Activated CD4-positive, alpha-beta memory T cell treated with anti-CD3 and anti-CD28 coated beads for 36 hours (primary cell): ENCODE measurements at regions of chr5 and their contacts with region 1.

Region 1: DNA sequence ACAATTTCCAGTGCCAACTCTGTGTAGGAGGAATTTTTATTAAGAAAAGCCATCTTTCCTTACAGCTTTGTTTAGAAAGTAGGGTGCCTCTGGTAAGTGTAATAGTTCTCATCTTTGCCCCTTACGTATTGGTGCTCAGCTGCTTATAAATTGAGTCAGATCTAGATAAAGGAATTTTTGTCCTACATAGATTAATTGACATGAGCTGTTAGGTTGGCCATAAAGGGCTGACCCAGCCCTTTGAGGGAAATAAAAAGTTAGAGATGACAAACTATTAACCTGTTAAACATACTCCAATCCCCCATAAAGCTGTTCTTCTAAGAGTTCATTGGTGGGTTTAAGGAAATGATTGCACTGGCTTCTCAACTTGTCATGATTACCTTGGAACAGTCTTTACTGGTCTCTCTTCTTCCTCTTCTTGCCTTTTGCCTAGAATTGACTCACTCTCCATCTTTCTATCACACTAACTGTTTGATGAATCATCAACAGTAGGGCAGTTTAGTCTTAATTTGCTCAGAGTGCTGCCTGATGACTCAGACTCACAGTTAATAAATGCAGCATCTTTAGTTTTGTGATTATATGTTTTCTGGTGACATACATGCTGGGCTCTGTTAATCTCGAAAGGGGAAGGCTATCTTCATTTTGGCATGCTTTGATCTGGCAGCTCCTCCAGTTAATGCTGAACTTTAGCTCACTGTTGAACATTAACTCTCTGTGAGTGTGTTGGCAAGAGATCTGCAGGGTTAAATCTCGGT is 51.7 kb downstream of the ARHGAP26 start:
- DNase-seq: peak; percentile 35
- H3K4me3 Mint-ChIP-seq: no peak overlapping the region
- H3K27ac Mint-ChIP-seq: peak overlapping the region; percentile 83
- H3K4me1 Mint-ChIP-seq: peaks cover 71% of the 10 kb centered on the region
- H3K27me3 Mint-ChIP-seq: no peaks in the 10 kb centered on the region

Region 2: DNA sequence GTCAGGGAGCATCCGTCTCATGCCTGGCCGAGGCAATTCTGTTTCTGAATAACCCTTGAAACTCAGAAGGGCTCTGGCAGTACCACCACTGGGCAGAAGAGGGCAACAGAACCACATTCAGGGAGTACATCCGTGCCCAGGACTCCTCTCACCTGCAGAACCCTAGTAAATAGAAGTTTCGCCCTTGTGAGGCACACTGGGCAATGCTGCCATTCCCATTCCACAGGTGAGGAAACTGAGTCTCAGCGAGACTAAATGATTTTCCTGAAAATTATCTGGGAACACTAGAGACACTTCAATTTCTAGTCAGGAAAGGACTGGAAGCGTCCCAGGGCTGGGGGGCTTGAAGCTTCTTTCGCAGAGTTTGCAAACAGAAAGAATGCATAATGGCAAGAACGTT is 210.8 kb before region 1 on chr5:
- CTCF ChIA-PET with region 1: no interaction called
- POLR2A ChIA-PET with region 1: no interaction called
- intact Hi-C with region 1: loop called (anchors 10 kb)
- DNase-seq: peak; percentile 85
- H3K4me3 Mint-ChIP-seq: no peak overlapping the region
- H3K27ac Mint-ChIP-seq: no peak overlapping the region
- H3K4me1 Mint-ChIP-seq: no peaks in the 10 kb centered on the region
- H3K27me3 Mint-ChIP-seq: peaks cover 15% of the 10 kb centered on the region

Region 3: GRCh38 chr5:142699184-142699720 is 122.7 kb before region 1 on chr5:
- CTCF ChIA-PET with region 1: no interaction called
- POLR2A ChIA-PET with region 1: no interaction called
- intact Hi-C with region 1: no loop called
- DNase-seq: peak; percentile 86
- H3K4me3 Mint-ChIP-seq: no peak overlapping the region
- H3K27ac Mint-ChIP-seq: no peak overlapping the region
- H3K4me1 Mint-ChIP-seq: no peaks in the 10 kb centered on the region
- H3K27me3 Mint-ChIP-seq: peaks cover 6% of the 10 kb centered on the region

Region 4: DNA sequence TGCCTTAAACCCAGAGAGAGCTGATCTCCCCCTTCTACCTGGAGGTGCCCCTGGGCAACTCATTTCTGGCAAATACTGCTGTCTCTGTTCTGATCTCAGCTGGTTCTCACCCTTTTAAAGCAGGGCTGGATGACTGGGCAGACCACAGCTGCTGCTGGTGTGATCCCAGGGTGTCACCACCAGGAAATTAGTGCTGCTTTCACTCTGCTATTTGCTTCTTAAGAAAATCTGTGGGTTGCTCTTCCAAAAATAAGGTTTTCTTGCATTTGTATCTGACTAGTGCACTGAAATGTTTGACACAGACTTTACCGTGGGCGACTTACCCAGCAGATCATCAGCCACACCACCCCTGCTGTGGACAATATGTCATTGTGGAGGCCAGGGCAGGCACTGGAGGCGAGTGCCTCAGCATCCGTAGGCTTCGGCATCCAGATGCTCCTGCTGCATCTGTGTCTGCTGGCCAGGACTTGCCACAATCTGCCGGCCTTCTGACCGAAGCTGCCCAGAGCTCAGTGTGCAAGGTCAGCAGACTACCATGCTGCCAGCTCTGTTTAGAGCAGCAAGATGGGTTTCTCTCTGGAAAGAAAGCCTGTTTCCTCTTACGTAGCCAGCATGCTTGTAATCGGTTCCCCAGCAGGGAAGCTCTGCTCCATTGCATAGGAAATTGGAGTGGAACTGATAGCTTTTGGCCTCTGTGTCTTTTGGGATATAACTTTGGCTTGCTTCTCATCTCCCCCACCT is 38.1 kb before region 1 on chr5:
- CTCF ChIA-PET with region 1: interaction called, 5 read pairs
- POLR2A ChIA-PET with region 1: interaction called, 22 read pairs
- intact Hi-C with region 1: loop called (anchors 1 kb)
- DNase-seq: peak; percentile 90
- H3K4me3 Mint-ChIP-seq: peak overlapping the region; percentile 34
- H3K27ac Mint-ChIP-seq: peak overlapping the region; percentile 85
- H3K4me1 Mint-ChIP-seq: peaks cover 56% of the 10 kb centered on the region
- H3K27me3 Mint-ChIP-seq: no peaks in the 10 kb centered on the region

Region 5: DNA sequence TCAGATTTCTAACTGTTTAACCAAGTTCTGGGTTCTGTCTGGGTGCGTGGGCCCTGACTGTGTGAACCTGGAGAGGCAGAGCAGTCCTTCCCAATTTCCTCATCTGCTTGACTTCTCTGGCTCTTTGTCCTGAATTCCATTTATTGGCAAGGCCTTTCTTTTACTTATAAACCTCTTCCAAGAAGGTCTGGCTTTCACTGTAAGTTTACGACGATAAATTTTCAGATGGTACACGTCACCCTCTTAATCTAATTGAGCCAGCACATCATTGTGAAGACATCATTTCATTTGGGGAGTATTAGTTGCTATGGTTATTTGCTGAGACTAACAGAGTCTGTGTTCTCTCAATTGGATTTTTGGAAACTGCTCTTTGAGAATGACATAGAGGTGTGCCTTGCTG is 40.7 kb after region 1 on chr5:
- CTCF ChIA-PET with region 1: interaction called, 6 read pairs
- POLR2A ChIA-PET with region 1: no interaction called
- intact Hi-C with region 1: loop called (anchors 1 kb)
- DNase-seq: no peak
- H3K4me3 Mint-ChIP-seq: no peak overlapping the region
- H3K27ac Mint-ChIP-seq: no peak overlapping the region
- H3K4me1 Mint-ChIP-seq: peaks cover 25% of the 10 kb centered on the region
- H3K27me3 Mint-ChIP-seq: no peaks in the 10 kb centered on the region